K562 (cell line): ENCODE measurements at regions of chr9 and their contacts with region 1.

Region 1: DNA sequence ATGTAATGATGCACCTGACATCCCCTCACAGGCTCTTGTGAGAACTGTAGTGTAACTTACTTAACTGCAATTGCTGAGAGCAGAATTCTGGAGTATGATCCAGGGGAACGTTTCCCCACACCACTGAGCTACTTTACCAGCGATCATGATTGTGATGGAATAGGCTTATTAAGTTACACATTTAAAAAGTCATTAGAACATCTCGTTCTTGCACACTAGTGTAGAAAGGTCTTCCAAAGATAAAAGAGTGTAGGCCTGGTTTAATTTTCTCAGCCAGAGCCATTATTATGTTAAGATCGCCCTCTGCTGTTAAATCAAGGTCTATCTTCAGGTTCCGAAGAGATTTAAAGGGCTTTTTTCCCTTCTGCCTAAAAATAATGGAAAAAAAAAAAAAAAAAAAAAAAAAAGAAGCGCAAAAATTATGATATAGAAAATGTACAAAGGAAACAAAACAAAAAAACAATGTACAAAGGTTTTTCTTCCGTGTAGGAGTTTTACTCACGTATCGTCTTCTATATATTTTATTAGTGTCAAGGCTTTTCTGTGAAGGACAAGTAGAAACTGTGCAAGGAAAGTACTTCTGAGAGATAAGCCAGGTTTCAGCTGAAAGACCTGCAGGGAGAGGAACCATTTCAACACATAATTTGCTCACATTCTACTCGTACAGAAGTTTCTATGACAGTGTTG is 18.6 kb upstream of the MOB3B start:
- DNase-seq: peak in 1 of 4 experiments; percentile 9
- ATAC-seq: peak; percentile 56; the same call in 1 of the 3 replicates
- H3K4me3 ChIP-seq: no peak overlapping the region
- H3K27ac ChIP-seq: no peak overlapping the region
- H3K4me1 ChIP-seq: no peaks in the 10 kb centered on the region
- H3K27me3 ChIP-seq: no peaks in the 10 kb centered on the region
- CTCF ChIP-seq: peak; percentile 13 to 51 (median 13); a peak in 3 of 6 replicates
- EP300 ChIP-seq: no peak
- POLR2A ChIP-seq: no peak
- RAD21 ChIP-seq: peak; percentile 23 to 64; a peak in 3 of 4 replicates

Region 2: GRCh38 chr9:27276193-27277030 is 271.8 kb before region 1 on chr9:
- CTCF ChIA-PET with region 1: no interaction called
- POLR2A ChIA-PET with region 1: no interaction called
- in situ Hi-C with region 1: no loop called
- intact Hi-C with region 1: loop called (anchors 1 kb)
- DNase-seq: peak; percentile 10 to 25 (median 16)
- ATAC-seq: no peak
- H3K4me3 ChIP-seq: no peak overlapping the region
- H3K27ac ChIP-seq: no peak overlapping the region
- H3K4me1 ChIP-seq: peaks cover 0 to 4% of the 10 kb centered on the region in 2 experiments; a peak in 2 of 5 replicates
- H3K27me3 ChIP-seq: no peaks in the 10 kb centered on the region
- CTCF ChIP-seq: peak in 2 of 3 experiments; percentile 41 to 55; a peak in 5 of 6 replicates
- EP300 ChIP-seq: no peak
- POLR2A ChIP-seq: no peak
- RAD21 ChIP-seq: peak; percentile 45 to 55

Region 3: GRCh38 chr9:27395484-27395921 is 152.7 kb before region 1 on chr9:
- CTCF ChIA-PET with region 1: no interaction called
- POLR2A ChIA-PET with region 1: no interaction called
- in situ Hi-C with region 1: no loop called
- intact Hi-C with region 1: no loop called
- DNase-seq: no peak
- ATAC-seq: peak; percentile 49; the same call in 1 of the 3 replicates
- H3K4me3 ChIP-seq: no peak overlapping the region
- H3K27ac ChIP-seq: no peak overlapping the region
- H3K4me1 ChIP-seq: peaks cover 0 to 2% of the 10 kb centered on the region in 2 experiments; a peak in 3 of 5 replicates
- H3K27me3 ChIP-seq: no peaks in the 10 kb centered on the region
- CTCF ChIP-seq: no peak
- EP300 ChIP-seq: no peak
- POLR2A ChIP-seq: no peak
- RAD21 ChIP-seq: no peak

Region 4: DNA sequence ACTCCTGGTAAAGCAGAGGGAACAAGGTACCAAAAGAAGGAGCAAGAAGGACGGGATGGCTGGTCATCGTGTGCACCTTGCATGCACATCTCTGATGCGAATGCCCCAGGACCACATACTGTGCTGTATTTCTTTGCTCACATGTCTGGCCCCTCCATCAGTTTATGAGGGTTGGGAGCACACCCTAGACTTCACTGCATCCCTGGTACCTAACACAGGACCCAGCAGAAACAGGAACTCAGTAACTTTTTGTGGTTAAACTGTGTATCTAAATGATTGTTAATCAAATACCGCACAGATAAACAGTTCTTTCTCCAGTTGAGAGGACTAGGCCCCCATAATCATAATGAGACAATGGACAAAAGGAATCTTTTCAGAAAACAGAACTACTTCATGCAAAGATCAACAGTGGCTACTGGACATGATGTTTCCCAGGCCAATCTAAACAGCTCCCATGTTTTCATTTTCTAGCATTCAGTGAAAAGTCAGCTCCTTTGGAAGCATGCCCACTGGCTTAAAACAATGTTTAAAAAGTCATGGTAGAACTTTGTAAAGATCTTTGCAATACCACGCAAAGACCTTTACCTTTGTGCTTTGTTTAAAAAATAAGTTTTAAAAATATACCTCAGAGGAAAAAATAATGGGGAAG is 79.6 kb before region 1 on chr9:
- CTCF ChIA-PET with region 1: no interaction called
- POLR2A ChIA-PET with region 1: no interaction called
- in situ Hi-C with region 1: no loop called
- intact Hi-C with region 1: no loop called
- DNase-seq: no peak
- ATAC-seq: no peak
- H3K4me3 ChIP-seq: no peak overlapping the region
- H3K27ac ChIP-seq: no peak overlapping the region
- H3K4me1 ChIP-seq: peaks cover 6 to 13% of the 10 kb centered on the region in 2 experiments; a peak in 3 of 5 replicates
- H3K27me3 ChIP-seq: no peaks in the 10 kb centered on the region
- CTCF ChIP-seq: no peak
- EP300 ChIP-seq: no peak
- POLR2A ChIP-seq: no peak
- RAD21 ChIP-seq: no peak

Region 5: DNA sequence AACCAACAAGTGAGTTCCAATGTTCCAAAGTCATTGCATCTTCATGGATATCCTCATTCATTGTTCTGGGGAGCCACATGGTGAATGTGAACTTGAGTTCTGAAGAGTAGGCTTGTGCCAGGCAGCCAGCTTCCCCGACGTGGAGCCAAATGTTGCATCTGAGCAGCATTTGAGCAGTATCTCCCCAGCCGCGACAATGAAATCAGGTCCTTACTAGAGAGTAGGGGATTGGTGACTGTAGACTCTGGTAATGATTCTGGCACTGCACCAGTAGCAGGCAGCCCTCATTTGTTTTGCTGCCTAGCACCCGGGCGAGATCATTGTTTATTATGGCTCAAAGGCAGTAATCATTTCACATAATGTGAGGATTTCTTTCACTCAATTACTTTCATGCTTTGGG is 476.5 kb after region 1 on chr9:
- CTCF ChIA-PET with region 1: no interaction called
- POLR2A ChIA-PET with region 1: no interaction called
- in situ Hi-C with region 1: no loop called
- intact Hi-C with region 1: no loop called
- DNase-seq: no peak
- ATAC-seq: no peak
- H3K4me3 ChIP-seq: no peak overlapping the region
- H3K27ac ChIP-seq: no peak overlapping the region
- H3K4me1 ChIP-seq: no peaks in the 10 kb centered on the region
- H3K27me3 ChIP-seq: no peaks in the 10 kb centered on the region
- CTCF ChIP-seq: no peak
- EP300 ChIP-seq: no peak
- POLR2A ChIP-seq: no peak
- RAD21 ChIP-seq: no peak